ENCODE measurements at regions of chr10 and their contacts with region 1.

Region 1: GRCh38 chr10:67788025-67788886 is 49.7 kb downstream of the DNAJC12 start:
- DNase-seq: peak; percentile 65
- H3K4me3 Mint-ChIP-seq: peak overlapping the region; percentile 70
- H3K27ac Mint-ChIP-seq: peak overlapping the region; percentile 89
- H3K4me1 Mint-ChIP-seq: peaks cover 53% of the 10 kb centered on the region
- H3K27me3 Mint-ChIP-seq: no peaks in the 10 kb centered on the region

Region 2: DNA sequence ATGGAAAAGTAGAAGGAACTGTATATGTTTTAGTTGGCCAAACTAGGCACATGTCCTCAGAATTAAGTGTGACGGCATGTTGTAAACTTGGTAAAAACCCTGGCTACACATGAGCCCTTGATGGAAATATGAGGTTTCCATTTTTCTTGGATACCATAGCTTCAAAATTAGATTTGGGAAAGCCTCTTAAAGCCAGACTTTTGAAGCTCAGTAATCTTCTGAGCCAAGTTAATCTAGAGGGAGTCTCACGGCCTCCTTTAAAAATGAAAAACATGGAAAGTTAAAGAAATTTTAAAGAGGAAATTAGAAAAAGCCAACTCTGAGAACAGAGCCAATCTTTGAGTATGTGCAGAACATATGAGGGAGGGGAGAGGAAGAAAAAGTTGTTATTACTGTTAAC is 468.3 kb before region 1 on chr10:
- intact Hi-C with region 1: no loop called
- DNase-seq: no peak
- H3K4me3 Mint-ChIP-seq: no peak overlapping the region
- H3K27ac Mint-ChIP-seq: no peak overlapping the region
- H3K4me1 Mint-ChIP-seq: no peaks in the 10 kb centered on the region
- H3K27me3 Mint-ChIP-seq: peaks cover 3% of the 10 kb centered on the region

Region 3: GRCh38 chr10:67612577-67613537 is 175.4 kb before region 1 on chr10:
- intact Hi-C with region 1: loop called (anchors 1 kb)
- DNase-seq: peak; percentile 66
- H3K4me3 Mint-ChIP-seq: peak overlapping the region; percentile 47
- H3K27ac Mint-ChIP-seq: peak overlapping the region; percentile 49
- H3K4me1 Mint-ChIP-seq: peaks cover 23% of the 10 kb centered on the region
- H3K27me3 Mint-ChIP-seq: peaks cover 9% of the 10 kb centered on the region

Region 4: DNA sequence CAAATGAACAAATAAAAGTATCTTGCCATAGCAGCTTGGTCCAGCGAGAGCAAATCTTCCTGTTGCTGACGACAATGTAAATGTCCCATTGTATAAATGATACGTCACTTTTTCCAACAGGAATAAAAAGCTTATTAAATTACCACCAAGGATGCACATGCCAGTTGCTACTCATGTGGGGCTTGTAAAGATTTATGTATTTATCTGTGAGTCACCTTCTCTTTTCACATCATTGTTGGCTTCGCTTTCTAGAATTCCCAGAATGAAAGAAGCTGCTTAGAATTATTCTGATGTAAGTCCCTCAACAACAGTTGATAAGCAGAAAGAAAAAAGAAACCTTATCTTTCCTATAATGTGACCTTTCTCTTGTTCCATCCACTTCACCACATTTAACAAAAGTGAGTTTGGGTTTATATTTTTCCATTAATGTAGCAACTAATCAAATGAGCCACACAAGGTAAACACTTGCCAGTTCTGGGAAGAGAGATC is 27.4 kb after region 1 on chr10:
- intact Hi-C with region 1: loop called (anchors 1 kb)
- DNase-seq: no peak
- H3K4me3 Mint-ChIP-seq: peak overlapping the region; percentile 53
- H3K27ac Mint-ChIP-seq: peak overlapping the region; percentile 81
- H3K4me1 Mint-ChIP-seq: peaks cover 28% of the 10 kb centered on the region
- H3K27me3 Mint-ChIP-seq: no peaks in the 10 kb centered on the region

Region 5: DNA sequence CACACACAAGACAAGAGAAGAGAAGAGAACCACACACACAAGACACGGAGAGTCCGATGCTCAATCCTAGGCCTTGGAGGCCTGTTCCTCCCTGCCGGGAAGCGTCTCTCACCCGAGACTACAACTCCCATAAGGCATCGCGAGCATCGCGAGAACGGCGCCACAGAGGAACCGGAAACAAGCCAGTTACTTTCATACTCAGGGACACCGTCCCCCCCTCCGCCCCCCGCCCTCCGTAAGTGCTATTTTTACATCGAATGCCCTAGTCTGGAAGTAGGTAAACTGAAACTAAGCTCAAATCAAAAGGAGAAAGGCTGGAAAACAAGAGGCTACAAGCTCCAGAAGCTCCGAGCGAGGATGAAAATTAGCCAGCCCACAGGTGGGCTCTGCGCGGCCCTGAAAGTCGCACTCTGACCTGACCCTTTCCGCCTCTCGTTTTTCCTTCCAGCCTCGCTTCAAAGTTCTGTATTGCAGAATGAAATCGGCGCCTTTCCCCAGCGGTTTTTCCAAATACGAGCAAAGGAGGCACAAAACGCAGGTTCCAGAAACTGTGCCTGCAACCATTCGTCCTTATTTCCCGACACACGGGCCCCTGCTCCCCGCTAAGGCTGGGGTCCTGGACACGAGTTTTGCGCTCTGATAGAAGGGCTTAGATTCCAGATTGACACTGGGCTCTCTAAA is 61.2 kb after region 1 on chr10:
- intact Hi-C with region 1: loop called (anchors 1 kb)
- DNase-seq: peak; percentile 92
- H3K4me3 Mint-ChIP-seq: peak overlapping the region; percentile 91
- H3K27ac Mint-ChIP-seq: peak overlapping the region; percentile 95
- H3K4me1 Mint-ChIP-seq: no peaks in the 10 kb centered on the region
- H3K27me3 Mint-ChIP-seq: no peaks in the 10 kb centered on the region

Region 6: DNA sequence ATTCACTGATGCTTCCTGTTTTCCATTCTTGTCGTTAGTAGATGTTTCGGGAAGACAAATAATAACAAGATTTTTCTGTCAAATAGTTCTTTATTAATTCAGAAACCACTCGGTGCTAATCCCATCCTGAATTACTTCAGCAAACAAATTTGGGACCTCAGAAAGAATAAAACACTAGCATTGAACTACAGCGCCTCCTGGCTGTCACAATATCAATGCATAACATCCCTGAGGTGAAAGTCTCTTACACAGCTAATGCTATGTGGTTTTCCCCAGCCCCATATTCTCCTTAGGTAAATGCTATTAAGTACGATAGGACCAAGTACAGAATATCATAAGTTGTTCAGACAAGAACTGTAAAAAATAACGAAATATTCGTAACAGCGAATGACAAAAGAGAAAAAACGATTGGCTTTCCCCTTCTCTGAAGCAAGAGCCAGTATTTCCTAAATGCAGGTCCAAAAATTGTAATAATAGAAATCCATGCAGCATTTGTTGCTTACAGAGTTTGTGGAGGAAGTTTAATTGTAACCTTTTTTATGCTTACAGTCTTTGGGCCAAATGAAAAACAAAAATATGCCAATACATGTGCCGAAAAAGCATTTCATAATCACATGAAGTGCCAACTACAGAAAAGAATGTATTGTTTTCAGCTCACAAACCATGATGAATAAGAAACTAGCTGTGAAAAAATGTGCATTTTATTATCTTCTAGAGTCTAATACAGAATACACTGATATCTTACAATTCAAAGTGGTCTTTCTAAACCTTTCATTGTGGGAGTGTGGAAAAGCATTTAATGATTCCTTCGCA is 368.3 kb after region 1 on chr10:
- intact Hi-C with region 1: loop called (anchors 1 kb)
- DNase-seq: peak; percentile 26
- H3K4me3 Mint-ChIP-seq: no peak overlapping the region
- H3K27ac Mint-ChIP-seq: no peak overlapping the region
- H3K4me1 Mint-ChIP-seq: no peaks in the 10 kb centered on the region
- H3K27me3 Mint-ChIP-seq: no peaks in the 10 kb centered on the region

Region 7: GRCh38 chr10:68301790-68302502 is 513.7 kb after region 1 on chr10:
- intact Hi-C with region 1: loop called (anchors 1 kb)
- DNase-seq: no peak
- H3K4me3 Mint-ChIP-seq: no peak overlapping the region
- H3K27ac Mint-ChIP-seq: no peak overlapping the region
- H3K4me1 Mint-ChIP-seq: no peaks in the 10 kb centered on the region
- H3K27me3 Mint-ChIP-seq: no peaks in the 10 kb centered on the region